T-cell (primary cell): ENCODE measurements at regions of chr6 and their contacts with region 1.

Region 1: GRCh38 chr6:73675466-73676098 is 20.4 kb upstream of the CD109 start:
- DNase-seq: peak in 33 of 35 experiments; percentile 8 to 78 (median 48)
- ATAC-seq: peak; percentile 64 to 75 (median 68)
- H3K4me3 ChIP-seq: no peak overlapping the region
- H3K4me3 Mint-ChIP-seq: no peak overlapping the region
- H3K27ac ChIP-seq: no peak overlapping the region
- H3K27ac Mint-ChIP-seq: no peak overlapping the region
- H3K4me1 ChIP-seq: no peaks in the 10 kb centered on the region
- H3K4me1 Mint-ChIP-seq: no peaks in the 10 kb centered on the region
- H3K27me3 ChIP-seq: peaks cover 0 to 15% of the 10 kb centered on the region in 2 experiments
- H3K27me3 Mint-ChIP-seq: peaks cover 15 to 18% of the 10 kb centered on the region in 2 donors

Region 2: DNA sequence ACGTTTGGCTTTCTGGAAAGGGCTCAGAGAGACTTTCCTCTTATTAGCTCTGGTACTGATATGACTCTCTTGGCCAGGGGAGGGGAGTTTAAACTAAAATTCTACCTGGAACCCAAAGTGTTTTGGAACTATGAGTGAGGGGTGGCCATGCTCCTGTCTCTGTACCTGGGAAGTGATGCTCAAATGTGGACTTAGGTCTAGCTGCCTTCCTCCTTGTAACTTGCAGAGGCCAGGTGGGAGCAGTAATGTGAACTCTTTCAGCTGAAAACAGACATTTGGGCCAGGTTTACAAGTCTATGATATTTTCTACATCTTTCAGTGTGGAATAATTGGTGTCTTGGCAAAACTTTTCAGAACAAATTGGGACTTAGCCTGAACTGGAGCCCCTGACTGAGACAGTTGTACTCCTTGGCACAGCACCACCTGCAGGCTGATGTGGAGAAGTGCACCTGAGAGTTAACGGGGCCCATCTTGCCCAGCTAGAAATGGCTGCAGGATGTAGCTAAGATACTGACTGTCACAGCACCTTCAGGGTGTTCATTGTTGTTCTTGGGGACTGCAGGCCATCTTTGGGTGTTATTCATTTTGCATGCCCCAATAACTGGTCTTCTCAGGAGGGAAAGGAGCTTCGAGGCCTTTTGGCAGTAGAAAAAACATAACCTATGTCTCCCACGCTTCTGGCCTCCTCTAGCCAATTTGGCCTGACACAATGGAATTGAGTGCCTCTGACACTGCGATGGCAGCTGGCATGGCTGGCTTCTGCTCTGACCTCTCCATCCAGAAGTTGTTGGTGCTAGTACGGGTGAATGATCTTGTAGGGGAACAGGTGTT is 57.5 kb after region 1 on chr6:
- CTCF ChIA-PET with region 1: interaction called, 10 to 22 read pairs
- POLR2A ChIA-PET with region 1: no interaction called
- DNase-seq: peak; percentile 16 to 81 (median 54)
- ATAC-seq: peak; percentile 90 to 98 (median 96)
- H3K4me3 ChIP-seq: no peak overlapping the region
- H3K4me3 Mint-ChIP-seq: no peak overlapping the region
- H3K27ac ChIP-seq: no peak overlapping the region
- H3K27ac Mint-ChIP-seq: no peak overlapping the region
- H3K4me1 ChIP-seq: no peaks in the 10 kb centered on the region
- H3K4me1 Mint-ChIP-seq: no peaks in the 10 kb centered on the region
- H3K27me3 ChIP-seq: no peaks in the 10 kb centered on the region
- H3K27me3 Mint-ChIP-seq: no peaks in the 10 kb centered on the region